Left colon (tissue), 2 donors: ENCODE measurements at regions of chr22 and their contacts with region 1.

Region 1: GRCh38 chr22:30742291-30743256 is 47.9 kb downstream of the OSBP2 start:
- DNase-seq: no peak
- ATAC-seq: no peak

Region 2: DNA sequence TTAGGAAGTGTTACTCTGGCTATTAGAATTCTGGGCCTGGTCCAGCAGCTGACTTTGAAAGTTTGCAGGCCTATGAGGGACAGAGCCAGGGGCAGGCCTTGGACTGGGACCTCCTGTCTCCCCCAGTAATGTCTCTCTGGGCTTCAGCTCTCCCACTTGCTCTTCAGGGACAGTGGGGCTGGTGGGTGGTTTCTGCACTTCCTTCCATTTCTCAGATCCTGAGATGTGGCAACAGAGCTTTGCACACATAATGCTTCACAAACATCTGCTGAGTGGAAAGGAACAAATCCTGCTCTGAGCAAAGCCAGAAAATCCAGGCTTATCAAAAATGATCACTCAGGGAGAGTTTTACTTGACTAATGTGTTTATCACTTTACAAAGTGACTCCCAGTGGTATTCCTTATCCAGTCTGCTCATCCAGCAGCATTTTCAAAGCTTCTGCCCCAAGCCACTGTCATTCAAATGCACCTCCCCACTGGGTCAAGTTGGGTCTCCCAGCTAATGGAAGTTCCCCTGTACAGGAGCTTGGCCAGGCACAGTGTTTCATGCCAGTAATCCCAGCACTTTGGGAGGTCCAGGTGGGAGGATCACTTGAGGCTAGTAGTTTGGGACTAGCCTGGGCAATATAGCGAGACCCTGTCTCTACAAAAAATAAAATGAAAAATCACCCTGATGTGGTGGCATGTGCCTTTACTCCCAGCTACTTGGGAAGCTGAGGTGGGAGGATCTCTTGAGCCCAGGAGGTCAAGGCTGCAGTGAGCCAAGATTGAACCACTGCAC is 61.4 kb before region 1 on chr22:
- intact Hi-C with region 1: loop called in 1 of 2 experiments (anchors 10 kb)
- DNase-seq: no peak
- ATAC-seq: no peak